H1 (cell line): ENCODE measurements at regions of chr3 and their contacts with region 1.

Region 1: GRCh38 chr3:104628185-104628789 is 738.4 kb upstream of the ALCAM start:
- DNase-seq: no peak
- H3K4me3 ChIP-seq: no peak overlapping the region
- H3K27ac ChIP-seq: no peak overlapping the region
- H3K4me1 ChIP-seq: no peaks in the 10 kb centered on the region
- H3K27me3 ChIP-seq: no peaks in the 10 kb centered on the region
- CTCF ChIP-seq: peak in 2 of 3 experiments; percentile 20 to 57; a peak in 2 of 4 replicates
- EP300 ChIP-seq: no peak
- POLR2A ChIP-seq: no peak
- RAD21 ChIP-seq: peak; percentile 55 to 70

Region 2: DNA sequence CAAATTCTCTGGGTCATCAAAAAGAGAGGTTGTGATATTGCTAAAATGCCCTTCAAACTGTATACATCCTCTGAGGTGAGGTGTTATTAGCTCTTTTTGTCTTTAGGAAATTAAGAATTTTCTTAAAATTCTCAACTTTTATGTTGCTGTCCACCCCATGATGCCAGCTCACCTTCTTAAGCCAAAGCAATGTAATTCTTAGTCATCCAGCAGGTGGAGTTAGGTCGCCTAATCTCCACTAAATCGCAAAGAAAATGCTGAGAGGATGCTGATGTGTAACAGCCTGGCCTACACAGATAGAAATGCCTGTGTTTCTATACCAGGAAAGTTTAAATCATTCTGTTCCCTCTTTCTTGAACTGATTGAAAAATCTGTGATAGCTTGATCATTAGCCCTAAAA is 31.7 kb before region 1 on chr3:
- CTCF ChIA-PET with region 1: interaction called, 11 read pairs
- POLR2A ChIA-PET with region 1: no interaction called
- DNase-seq: no peak
- H3K4me3 ChIP-seq: no peak overlapping the region
- H3K27ac ChIP-seq: no peak overlapping the region
- H3K4me1 ChIP-seq: no peaks in the 10 kb centered on the region; a peak in 1 of 7 replicates
- H3K27me3 ChIP-seq: no peaks in the 10 kb centered on the region
- CTCF ChIP-seq: peak in 2 of 3 experiments; percentile 49 to 65; a peak in 3 of 4 replicates
- EP300 ChIP-seq: no peak
- POLR2A ChIP-seq: no peak
- RAD21 ChIP-seq: peak; percentile 76 to 82